ENCODE measurements at regions of chr2 and their contacts with region 1.

Region 1: GRCh38 chr2:219530048-219530963 is 13.3 kb downstream of the CHPF start:
- DNase-seq: peak; percentile 79 to 90 (median 87)
- H3K4me3 ChIP-seq: no peak overlapping the region
- H3K27ac ChIP-seq: no peak overlapping the region
- H3K4me1 ChIP-seq: no peaks in the 10 kb centered on the region
- H3K27me3 ChIP-seq: peaks cover 28% of the 10 kb centered on the region
- CTCF ChIP-seq: peak; percentile 94 to 99 (median 96)
- POLR2A ChIP-seq: no peak

Region 2: DNA sequence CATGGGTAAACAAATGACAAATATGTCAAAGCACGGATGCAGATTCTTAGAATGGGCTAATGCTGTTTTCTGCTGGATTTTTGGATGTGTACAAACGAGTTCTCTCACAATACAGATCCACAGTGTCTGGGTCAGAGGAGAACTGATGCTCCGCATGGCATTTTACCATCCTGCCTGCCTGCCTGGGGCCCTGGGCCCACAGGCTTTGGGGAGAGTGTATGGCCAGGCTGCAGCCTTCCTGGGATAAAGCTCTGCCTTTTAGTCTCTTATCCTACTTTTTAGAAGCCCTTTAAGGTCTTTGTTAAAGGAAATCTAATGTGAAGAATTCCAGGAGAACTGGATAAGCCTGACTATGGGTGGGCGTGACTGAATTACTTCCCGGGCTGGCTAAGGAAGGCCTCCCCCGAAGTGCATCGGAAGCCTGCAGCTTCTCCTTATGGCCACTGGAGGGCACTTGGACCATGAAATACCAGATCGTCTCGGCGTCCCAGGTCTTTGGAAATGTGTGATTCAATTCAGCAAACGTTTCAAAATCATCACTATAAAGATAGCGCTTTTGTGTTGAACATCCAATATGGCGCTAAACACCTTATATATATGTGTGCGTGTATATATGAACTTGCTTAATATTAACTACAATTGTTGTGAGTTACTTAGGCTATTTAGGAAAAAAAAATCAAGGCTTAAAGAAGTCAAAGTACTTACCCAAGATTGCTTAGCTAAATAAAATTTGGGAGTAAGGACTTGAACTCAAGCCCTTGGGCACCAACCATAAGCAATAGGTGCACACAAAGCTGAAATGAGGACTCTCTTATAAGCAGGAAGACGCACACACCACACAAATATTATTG is 127.4 kb before region 1 on chr2:
- intact Hi-C with region 1: loop called (anchors 2 to 5 kb)
- DNase-seq: peak; percentile 49 to 87 (median 76)
- H3K4me3 ChIP-seq: no peak overlapping the region
- H3K27ac ChIP-seq: no peak overlapping the region
- H3K4me1 ChIP-seq: peaks cover 0 to 10% of the 10 kb centered on the region in 2 donors
- H3K27me3 ChIP-seq: no peaks in the 10 kb centered on the region
- CTCF ChIP-seq: peak; percentile 74 to 88 (median 84)
- POLR2A ChIP-seq: no peak

Region 3: DNA sequence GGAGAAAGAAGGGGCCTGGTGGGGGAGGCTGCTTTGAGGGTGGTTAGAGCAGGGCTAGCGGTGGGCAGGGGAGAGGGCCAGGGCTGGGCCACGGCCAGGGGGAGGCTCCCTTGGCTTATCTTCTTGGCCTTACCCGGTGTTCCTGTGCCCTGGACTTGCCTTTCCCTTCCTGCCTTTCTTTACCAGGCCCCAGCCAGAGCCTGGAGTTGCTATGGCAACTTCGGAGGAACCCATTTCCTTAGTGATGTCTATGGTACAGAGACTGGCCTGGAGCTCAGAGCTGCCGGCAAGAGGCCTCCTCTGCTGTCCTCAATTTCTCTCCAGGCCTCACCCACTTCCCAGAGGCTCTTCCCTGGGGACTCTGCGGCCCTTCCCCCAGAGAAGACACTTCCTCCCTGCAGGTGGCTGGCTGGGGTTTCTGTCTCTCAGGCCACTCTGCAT is 84.2 kb before region 1 on chr2:
- intact Hi-C with region 1: no loop called
- DNase-seq: peak in 4 of 7 donors; percentile 19 to 89 (median 44)
- H3K4me3 ChIP-seq: no peak overlapping the region
- H3K27ac ChIP-seq: peak overlapping the region in 2 of 5 donors; percentile 40 to 65
- H3K4me1 ChIP-seq: peaks cover 0 to 12% of the 10 kb centered on the region in 2 donors
- H3K27me3 ChIP-seq: peaks cover 24% of the 10 kb centered on the region
- CTCF ChIP-seq: no peak
- POLR2A ChIP-seq: no peak

Region 4: GRCh38 chr2:219459460-219460311 is 70.6 kb before region 1 on chr2:
- intact Hi-C with region 1: loop called (anchors 5 kb)
- DNase-seq: peak; percentile 45 to 79 (median 59)
- H3K4me3 ChIP-seq: no peak overlapping the region
- H3K27ac ChIP-seq: peak overlapping the region in 2 of 5 donors; percentile 0 to 47
- H3K4me1 ChIP-seq: no peaks in the 10 kb centered on the region
- H3K27me3 ChIP-seq: no peaks in the 10 kb centered on the region
- CTCF ChIP-seq: peak; percentile 62 to 78 (median 74)
- POLR2A ChIP-seq: no peak

Region 5: DNA sequence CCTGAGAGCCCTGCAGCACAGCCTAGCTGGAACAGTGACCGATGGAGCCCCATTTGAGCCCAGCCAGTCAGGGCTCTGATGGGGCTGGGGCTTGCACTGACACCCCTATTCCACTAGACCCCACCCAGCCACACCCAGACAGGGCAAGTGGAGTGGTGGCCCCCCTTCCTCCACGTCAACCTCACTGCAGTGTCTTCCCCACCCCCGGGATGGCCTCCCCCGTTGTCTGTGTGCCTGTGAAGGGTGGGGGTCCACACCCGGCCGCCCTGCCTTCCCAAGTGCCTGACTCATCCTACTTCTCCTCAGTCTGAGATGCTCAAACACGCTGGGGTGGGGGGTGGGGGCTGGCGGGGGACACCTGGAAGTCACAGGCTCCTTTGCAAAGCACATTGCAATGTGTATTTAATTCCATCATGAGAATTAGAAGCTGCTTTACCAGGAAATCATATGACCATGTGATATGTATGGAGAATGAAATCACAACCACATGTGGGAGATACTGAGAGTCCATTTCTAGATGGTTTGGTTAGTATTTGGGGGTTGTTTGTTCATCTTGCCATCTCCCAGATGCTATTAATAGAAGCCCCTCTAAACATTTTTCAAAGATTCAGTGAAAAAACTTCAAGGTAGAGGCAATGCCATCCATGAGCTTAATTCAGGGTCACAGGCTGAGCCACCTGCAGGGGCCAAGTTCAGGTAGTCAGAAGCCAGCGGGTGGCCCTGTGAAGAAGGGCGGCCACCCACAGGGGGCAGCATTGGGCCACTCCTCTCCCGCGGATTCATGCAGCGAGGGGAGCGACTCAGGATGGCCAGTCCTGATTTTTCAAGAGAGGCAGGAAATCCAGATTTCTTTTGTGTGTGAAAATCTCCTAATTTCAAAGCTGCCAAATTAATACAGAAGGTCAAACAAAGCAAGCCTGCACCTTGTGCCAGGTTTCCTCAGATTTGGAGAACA is 54.3 kb before region 1 on chr2:
- intact Hi-C with region 1: loop called (anchors 2 to 5 kb)
- DNase-seq: peak; percentile 52 to 86 (median 75)
- H3K4me3 ChIP-seq: no peak overlapping the region
- H3K27ac ChIP-seq: no peak overlapping the region
- H3K4me1 ChIP-seq: no peaks in the 10 kb centered on the region
- H3K27me3 ChIP-seq: no peaks in the 10 kb centered on the region
- CTCF ChIP-seq: peak; percentile 71 to 87 (median 80)
- POLR2A ChIP-seq: no peak

Region 6: GRCh38 chr2:219490186-219490585 is 40.1 kb before region 1 on chr2:
- intact Hi-C with region 1: loop called in 1 of 2 experiments (anchors 5 kb)
- DNase-seq: no peak
- H3K4me3 ChIP-seq: no peak overlapping the region
- H3K27ac ChIP-seq: no peak overlapping the region
- H3K4me1 ChIP-seq: no peaks in the 10 kb centered on the region
- H3K27me3 ChIP-seq: peaks cover 15% of the 10 kb centered on the region
- CTCF ChIP-seq: no peak
- POLR2A ChIP-seq: no peak

Region 7: GRCh38 chr2:219722349-219722776 is 192.1 kb after region 1 on chr2:
- intact Hi-C with region 1: no loop called
- DNase-seq: no peak
- H3K4me3 ChIP-seq: no peak overlapping the region
- H3K27ac ChIP-seq: no peak overlapping the region
- H3K4me1 ChIP-seq: no peaks in the 10 kb centered on the region
- H3K27me3 ChIP-seq: no peaks in the 10 kb centered on the region
- CTCF ChIP-seq: no peak
- POLR2A ChIP-seq: no peak

Measured in adrenal gland (tissue), 19 donors.